CD4-positive, alpha-beta T cell (primary cell): ENCODE measurements at regions of chr7 and their contacts with region 1.

Region 1: GRCh38 chr7:123748734-123749536 is at the start of gene WASL:
- DNase-seq: peak; percentile 74 to 95 (median 85)
- ATAC-seq: peak; percentile 76
- H3K4me3 ChIP-seq: peak within 1 kb of the TSS; percentile 94
- H3K4me3 Mint-ChIP-seq: peak within 1 kb of the TSS; percentile 94
- H3K27ac ChIP-seq: peak within 1 kb of the TSS; percentile 83 to 89
- H3K27ac Mint-ChIP-seq: peak within 1 kb of the TSS; percentile 90
- H3K4me1 ChIP-seq: peaks cover 17% of the 10 kb centered on the region
- H3K4me1 Mint-ChIP-seq: peaks cover 68% of the 10 kb centered on the region
- H3K27me3 ChIP-seq: no peaks in the 10 kb centered on the region
- H3K27me3 Mint-ChIP-seq: no peaks in the 10 kb centered on the region
- CTCF ChIP-seq: peak; percentile 11
- total RNA-seq, gene WASL: 8.6 to 9.3 TPM

Region 2: GRCh38 chr7:123455965-123456470 is 292.9 kb before region 1 on chr7:
- CTCF ChIA-PET with region 1: no interaction called
- POLR2A ChIA-PET with region 1: no interaction called
- intact Hi-C with region 1: no loop called
- DNase-seq: no peak
- ATAC-seq: no peak
- H3K4me3 ChIP-seq: no peak overlapping the region
- H3K4me3 Mint-ChIP-seq: no peak overlapping the region
- H3K27ac ChIP-seq: no peak overlapping the region
- H3K27ac Mint-ChIP-seq: no peak overlapping the region
- H3K4me1 ChIP-seq: no peaks in the 10 kb centered on the region
- H3K4me1 Mint-ChIP-seq: no peaks in the 10 kb centered on the region
- H3K27me3 ChIP-seq: no peaks in the 10 kb centered on the region
- H3K27me3 Mint-ChIP-seq: peaks cover 5% of the 10 kb centered on the region
- CTCF ChIP-seq: no peak

Region 3: DNA sequence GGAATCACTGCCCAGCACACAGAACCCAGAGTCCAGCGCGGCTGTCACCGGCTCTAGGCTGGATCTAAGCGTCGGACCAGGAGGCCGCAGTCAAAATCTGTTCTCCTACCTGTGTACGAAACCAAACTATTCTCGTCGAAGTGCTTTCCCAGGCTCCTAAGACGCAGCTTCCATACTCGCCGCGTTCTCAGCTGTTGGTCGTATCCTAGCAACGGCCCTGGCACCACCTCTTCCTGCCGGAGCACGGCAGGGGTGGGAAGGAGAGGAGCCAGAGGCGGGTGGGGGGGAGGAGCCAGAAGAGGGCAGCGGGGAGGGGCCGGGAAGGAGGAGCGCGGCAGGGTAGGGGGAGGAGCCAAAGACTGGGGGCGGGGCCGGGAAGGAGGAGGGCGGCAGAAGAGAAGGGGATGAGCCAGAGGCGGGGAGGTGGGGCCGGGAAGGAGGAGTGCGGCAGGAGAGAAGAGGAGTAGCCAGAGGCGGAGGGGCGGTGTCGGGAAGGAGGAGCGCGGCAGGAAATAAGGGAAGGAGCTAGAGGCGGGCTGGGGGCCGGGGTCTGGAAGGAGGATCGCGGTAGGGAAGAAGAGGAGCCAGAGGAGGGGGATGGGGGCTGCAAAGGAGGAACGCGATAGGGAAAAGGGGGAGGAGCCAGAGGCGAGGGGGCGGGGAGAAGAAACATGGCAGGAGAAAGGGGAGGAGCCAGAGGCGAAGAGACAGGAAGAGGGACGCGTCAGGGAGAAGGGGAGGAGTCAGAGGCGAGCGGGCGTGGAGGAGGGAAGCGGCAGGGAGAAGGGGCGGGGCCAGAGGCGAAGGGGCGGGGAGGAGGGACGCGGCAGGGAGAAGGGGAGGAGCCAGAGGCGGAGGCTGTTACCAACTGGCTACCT is 214.3 kb before region 1 on chr7 and contains the start of gene IQUB:
- CTCF ChIA-PET with region 1: no interaction called
- POLR2A ChIA-PET with region 1: interaction called, 5 read pairs
- intact Hi-C with region 1: loop called in 1 of 2 experiments (anchors 1 kb)
- DNase-seq: peak; percentile 88 to 99 (median 96)
- ATAC-seq: peak; percentile 83
- H3K4me3 ChIP-seq: peak within 1 kb of the TSS; percentile 78
- H3K4me3 Mint-ChIP-seq: peak within 1 kb of the TSS; percentile 91
- H3K27ac ChIP-seq: peak within 1 kb of the TSS in 1 of 2 donors; percentile 79
- H3K27ac Mint-ChIP-seq: peak within 1 kb of the TSS; percentile 40
- H3K4me1 ChIP-seq: peaks cover 23% of the 10 kb centered on the region
- H3K4me1 Mint-ChIP-seq: peaks cover 38% of the 10 kb centered on the region
- H3K27me3 ChIP-seq: peaks cover 4 to 12% of the 10 kb centered on the region in 2 experiments
- H3K27me3 Mint-ChIP-seq: peaks cover 21% of the 10 kb centered on the region
- CTCF ChIP-seq: no peak
- total RNA-seq, gene IQUB: not detected

Region 4: DNA sequence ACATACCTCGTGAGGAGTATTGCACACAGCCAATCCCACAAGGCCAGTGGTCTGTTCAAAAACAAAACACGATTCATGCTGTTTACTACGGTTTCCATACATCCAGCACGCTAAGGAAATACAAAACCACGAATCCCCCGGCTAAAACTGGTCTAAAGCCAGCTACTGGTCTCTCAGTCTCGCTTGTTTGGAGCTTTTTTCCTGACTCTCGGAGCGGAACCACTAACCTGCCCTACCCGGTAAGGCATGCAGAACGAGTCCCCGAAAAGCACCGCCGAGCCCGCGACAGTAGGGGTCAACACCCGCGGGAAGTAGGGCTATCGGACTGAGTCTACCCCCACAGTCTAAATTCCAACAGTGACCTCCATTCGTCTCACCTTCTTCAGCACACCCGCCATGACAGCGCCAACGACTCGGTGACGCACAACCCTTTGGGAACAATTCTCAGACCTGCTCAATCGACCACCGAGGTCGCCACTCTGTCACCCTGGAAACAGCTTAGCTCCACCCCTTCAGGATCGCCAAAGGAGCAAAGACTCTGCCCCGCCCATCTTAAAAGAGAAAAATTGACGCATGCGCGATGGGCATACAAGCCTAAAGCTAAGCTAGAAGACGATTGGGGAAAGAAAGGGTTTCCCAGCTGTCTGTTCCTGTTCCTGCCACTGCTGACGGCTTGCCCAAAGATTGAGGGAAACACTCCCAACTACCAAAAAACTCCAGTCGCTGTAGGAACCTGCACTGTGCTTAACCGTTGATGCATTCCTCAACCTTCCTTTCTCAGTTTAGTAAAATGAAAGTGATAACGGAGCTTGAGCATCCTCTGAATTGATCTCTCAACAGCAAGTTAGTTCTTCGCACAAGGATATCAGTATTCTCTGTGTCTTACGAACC is 191.3 kb before region 1 on chr7 and contains the start of gene NDUFA5:
- CTCF ChIA-PET with region 1: interaction called, 3 read pairs
- POLR2A ChIA-PET with region 1: interaction called, 34 read pairs
- intact Hi-C with region 1: loop called (anchors 2 kb)
- DNase-seq: peak; percentile 91 to 99 (median 95)
- ATAC-seq: peak; percentile 97
- H3K4me3 ChIP-seq: peak within 1 kb of the TSS; percentile 69
- H3K4me3 Mint-ChIP-seq: no peak within 1 kb of the TSS
- H3K27ac ChIP-seq: peak within 1 kb of the TSS; percentile 58 to 66
- H3K27ac Mint-ChIP-seq: no peak within 1 kb of the TSS
- H3K4me1 ChIP-seq: peaks cover 8% of the 10 kb centered on the region
- H3K4me1 Mint-ChIP-seq: peaks cover 11% of the 10 kb centered on the region
- H3K27me3 ChIP-seq: no peaks in the 10 kb centered on the region
- H3K27me3 Mint-ChIP-seq: no peaks in the 10 kb centered on the region
- CTCF ChIP-seq: no peak
- total RNA-seq, gene NDUFA5: 67.9 to 68.6 TPM

Region 5: DNA sequence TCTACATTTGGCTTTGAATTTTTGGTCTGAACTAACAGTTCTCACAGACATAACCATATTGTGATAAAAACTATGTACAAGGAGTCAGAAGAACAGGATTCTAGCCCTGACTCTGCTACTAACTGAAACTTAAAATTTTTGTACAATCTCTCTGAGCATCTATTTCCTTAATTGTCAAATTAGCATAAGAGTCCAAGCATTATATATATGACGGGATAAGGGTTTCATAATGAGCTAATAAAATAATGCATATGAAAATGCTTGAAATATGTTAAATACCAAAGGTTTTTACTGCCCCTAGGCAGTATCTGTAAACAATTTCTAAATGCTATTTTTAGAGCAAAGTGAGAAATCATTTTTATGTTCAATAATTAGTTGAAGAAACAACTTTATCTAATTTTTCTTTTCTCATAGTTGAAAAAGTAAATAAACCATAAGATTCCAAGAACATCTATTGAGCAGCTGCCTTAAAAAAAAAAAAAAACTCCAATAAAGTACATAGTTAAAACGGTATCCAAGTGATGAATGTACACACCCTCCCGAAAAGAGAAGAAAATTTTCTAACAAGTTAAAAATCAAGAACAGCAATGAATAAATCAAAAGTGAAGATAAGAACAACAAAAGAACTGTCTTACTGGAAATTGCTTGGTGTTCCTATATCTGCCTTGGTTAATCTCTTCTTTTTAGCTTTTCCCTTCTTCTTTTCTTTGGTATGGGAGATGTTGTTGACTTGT is 52.8 kb before region 1 on chr7:
- CTCF ChIA-PET with region 1: interaction called, 6 read pairs
- POLR2A ChIA-PET with region 1: no interaction called
- intact Hi-C with region 1: loop called in 1 of 2 experiments (anchors 2 kb)
- DNase-seq: no peak
- ATAC-seq: no peak
- H3K4me3 ChIP-seq: no peak overlapping the region
- H3K4me3 Mint-ChIP-seq: no peak overlapping the region
- H3K27ac ChIP-seq: no peak overlapping the region
- H3K27ac Mint-ChIP-seq: no peak overlapping the region
- H3K4me1 ChIP-seq: no peaks in the 10 kb centered on the region
- H3K4me1 Mint-ChIP-seq: no peaks in the 10 kb centered on the region
- H3K27me3 ChIP-seq: no peaks in the 10 kb centered on the region
- H3K27me3 Mint-ChIP-seq: no peaks in the 10 kb centered on the region
- CTCF ChIP-seq: no peak

Region 6: DNA sequence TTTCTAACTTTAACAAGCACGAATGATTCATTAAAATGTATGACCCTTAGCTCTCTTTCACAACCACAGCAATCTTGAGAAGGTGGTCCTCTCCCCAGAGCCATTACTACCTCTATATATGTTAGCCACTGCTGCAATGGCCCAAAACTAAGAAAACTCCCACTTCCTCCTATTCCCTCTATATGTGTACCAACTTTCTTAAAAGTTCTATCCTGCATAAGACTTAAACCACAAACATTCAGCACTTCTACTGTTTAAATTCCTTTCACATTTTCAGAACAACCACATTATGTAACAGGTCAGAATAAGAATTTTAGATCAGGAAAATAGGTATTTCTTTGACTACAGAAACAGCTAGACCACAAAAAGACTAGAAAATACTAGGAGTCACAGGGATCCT is 36.3 kb before region 1 on chr7:
- CTCF ChIA-PET with region 1: no interaction called
- POLR2A ChIA-PET with region 1: interaction called, 7 read pairs
- intact Hi-C with region 1: loop called in 1 of 2 experiments (anchors 5 kb)
- DNase-seq: no peak
- ATAC-seq: no peak
- H3K4me3 ChIP-seq: no peak overlapping the region
- H3K4me3 Mint-ChIP-seq: no peak overlapping the region
- H3K27ac ChIP-seq: no peak overlapping the region
- H3K27ac Mint-ChIP-seq: peak overlapping the region; percentile 3
- H3K4me1 ChIP-seq: peaks cover 3% of the 10 kb centered on the region
- H3K4me1 Mint-ChIP-seq: peaks cover 64% of the 10 kb centered on the region
- H3K27me3 ChIP-seq: no peaks in the 10 kb centered on the region
- H3K27me3 Mint-ChIP-seq: no peaks in the 10 kb centered on the region
- CTCF ChIP-seq: no peak

Region 7: GRCh38 chr7:123738356-123738755 is 10.6 kb before region 1 on chr7:
- CTCF ChIA-PET with region 1: interaction called, 5 read pairs
- POLR2A ChIA-PET with region 1: interaction called, 15 read pairs
- intact Hi-C with region 1: no loop called
- DNase-seq: no peak
- ATAC-seq: no peak
- H3K4me3 ChIP-seq: no peak overlapping the region
- H3K4me3 Mint-ChIP-seq: no peak overlapping the region
- H3K27ac ChIP-seq: no peak overlapping the region
- H3K27ac Mint-ChIP-seq: no peak overlapping the region
- H3K4me1 ChIP-seq: peaks cover 11% of the 10 kb centered on the region
- H3K4me1 Mint-ChIP-seq: peaks cover 66% of the 10 kb centered on the region
- H3K27me3 ChIP-seq: no peaks in the 10 kb centered on the region
- H3K27me3 Mint-ChIP-seq: no peaks in the 10 kb centered on the region
- CTCF ChIP-seq: no peak

Region 8: GRCh38 chr7:124929467-124930172 is 1180.7 kb after region 1 on chr7 and contains the start of gene POT1:
- CTCF ChIA-PET with region 1: no interaction called
- POLR2A ChIA-PET with region 1: interaction called, 10 read pairs
- intact Hi-C with region 1: loop called in 1 of 2 experiments (anchors 5 kb)
- DNase-seq: peak; percentile 91 to 99 (median 94)
- ATAC-seq: peak; percentile 95
- H3K4me3 ChIP-seq: peak within 1 kb of the TSS; percentile 76
- H3K4me3 Mint-ChIP-seq: peak within 1 kb of the TSS; percentile 90
- H3K27ac ChIP-seq: peak within 1 kb of the TSS; percentile 77 to 90
- H3K27ac Mint-ChIP-seq: peak within 1 kb of the TSS; percentile 88
- H3K4me1 ChIP-seq: peaks cover 9% of the 10 kb centered on the region
- H3K4me1 Mint-ChIP-seq: peaks cover 48% of the 10 kb centered on the region
- H3K27me3 ChIP-seq: no peaks in the 10 kb centered on the region
- H3K27me3 Mint-ChIP-seq: no peaks in the 10 kb centered on the region
- CTCF ChIP-seq: no peak
- total RNA-seq, gene POT1: 8.0 to 8.3 TPM